Activated CD4-positive, alpha-beta T cell treated with anti-CD3 and anti-CD28 coated beads, Interleukin-2, amount 10 ng/mL, durations not matched to agents 24 days and 14 days (primary cell): ENCODE measurements at regions of chr10 and their contacts with region 1.

Region 1: DNA sequence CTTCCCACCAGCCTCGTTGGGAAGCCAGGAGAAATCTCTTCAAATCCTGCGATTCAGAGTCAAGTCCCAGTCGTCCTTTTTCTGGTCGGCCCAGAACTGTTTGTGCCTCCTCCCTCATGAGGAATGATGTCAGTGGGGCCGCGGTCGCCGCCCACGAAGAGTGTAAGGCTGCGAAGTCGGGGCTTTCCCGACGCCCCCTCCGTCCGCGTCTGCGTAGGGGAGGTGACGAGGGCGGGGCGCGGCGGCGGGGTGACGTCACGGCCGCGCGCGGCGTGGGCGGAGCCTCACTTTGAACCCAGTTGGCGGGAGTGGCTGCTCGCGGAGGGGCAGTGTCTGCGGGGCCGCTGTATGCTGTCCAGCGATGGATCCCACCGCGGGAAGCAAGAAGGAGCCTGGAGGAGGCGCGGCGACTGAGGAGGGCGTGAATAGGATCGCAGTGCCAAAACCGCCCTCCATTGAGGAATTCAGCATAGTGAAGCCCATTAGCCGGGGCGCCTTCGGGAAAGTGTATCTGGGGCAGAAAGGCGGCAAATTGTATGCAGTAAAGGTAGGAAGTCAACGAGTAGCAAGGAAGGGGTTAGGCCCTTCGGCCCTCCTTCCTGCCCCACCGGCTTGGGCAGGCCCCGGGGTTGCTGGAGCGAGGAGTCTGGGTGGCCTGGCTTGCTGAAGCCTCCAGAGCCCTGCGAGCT is at the start of gene MASTL:
- DNase-seq: peak; percentile 99
- H3K4me3 Mint-ChIP-seq: peak within 1 kb of the TSS; percentile 92
- H3K27ac Mint-ChIP-seq: peak within 1 kb of the TSS; percentile 100
- H3K4me1 Mint-ChIP-seq: peaks cover 34% of the 10 kb centered on the region
- H3K27me3 Mint-ChIP-seq: no peaks in the 10 kb centered on the region
- total RNA-seq, gene MASTL: 34.0 and 34.5 TPM in 2 replicates

Region 2: GRCh38 chr10:26437637-26438461 is 717.4 kb before region 1 on chr10 and contains the start of gene APBB1IP:
- intact Hi-C with region 1: loop called (anchors 5 kb)
- DNase-seq: peak; percentile 87
- H3K4me3 Mint-ChIP-seq: peak within 1 kb of the TSS; percentile 92
- H3K27ac Mint-ChIP-seq: peak within 1 kb of the TSS; percentile 95
- H3K4me1 Mint-ChIP-seq: peaks cover 37% of the 10 kb centered on the region
- H3K27me3 Mint-ChIP-seq: no peaks in the 10 kb centered on the region
- total RNA-seq, gene APBB1IP: 40.0 and 41.3 TPM in 2 replicates

Region 3: GRCh38 chr10:26737730-26738129 is 417.5 kb before region 1 on chr10:
- intact Hi-C with region 1: loop called (anchors 2 kb)
- DNase-seq: peak; percentile 83
- H3K4me3 Mint-ChIP-seq: peak overlapping the region; percentile 47
- H3K27ac Mint-ChIP-seq: peak overlapping the region; percentile 98
- H3K4me1 Mint-ChIP-seq: peaks cover 42% of the 10 kb centered on the region
- H3K27me3 Mint-ChIP-seq: no peaks in the 10 kb centered on the region

Region 4: DNA sequence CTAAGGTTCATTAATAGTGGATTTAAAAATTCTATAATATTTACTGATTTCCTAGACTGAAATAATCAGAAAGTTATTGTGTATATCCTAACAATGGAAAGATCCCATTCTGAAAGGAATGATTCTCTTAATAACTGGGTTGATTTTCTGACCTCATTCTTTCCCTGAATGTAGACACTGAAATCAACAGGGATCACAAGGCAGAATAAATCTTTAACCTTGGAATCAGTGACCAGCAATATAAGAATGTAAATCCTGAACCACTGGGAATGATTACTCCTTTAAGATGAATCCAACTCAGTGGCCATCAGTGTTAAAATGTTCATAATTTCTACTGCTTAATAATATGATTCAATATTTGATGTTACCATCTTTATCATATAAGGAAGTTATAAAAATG is 102.6 kb before region 1 on chr10:
- intact Hi-C with region 1: no loop called
- DNase-seq: no peak
- H3K4me3 Mint-ChIP-seq: no peak overlapping the region
- H3K27ac Mint-ChIP-seq: no peak overlapping the region
- H3K4me1 Mint-ChIP-seq: no peaks in the 10 kb centered on the region
- H3K27me3 Mint-ChIP-seq: no peaks in the 10 kb centered on the region

Region 5: DNA sequence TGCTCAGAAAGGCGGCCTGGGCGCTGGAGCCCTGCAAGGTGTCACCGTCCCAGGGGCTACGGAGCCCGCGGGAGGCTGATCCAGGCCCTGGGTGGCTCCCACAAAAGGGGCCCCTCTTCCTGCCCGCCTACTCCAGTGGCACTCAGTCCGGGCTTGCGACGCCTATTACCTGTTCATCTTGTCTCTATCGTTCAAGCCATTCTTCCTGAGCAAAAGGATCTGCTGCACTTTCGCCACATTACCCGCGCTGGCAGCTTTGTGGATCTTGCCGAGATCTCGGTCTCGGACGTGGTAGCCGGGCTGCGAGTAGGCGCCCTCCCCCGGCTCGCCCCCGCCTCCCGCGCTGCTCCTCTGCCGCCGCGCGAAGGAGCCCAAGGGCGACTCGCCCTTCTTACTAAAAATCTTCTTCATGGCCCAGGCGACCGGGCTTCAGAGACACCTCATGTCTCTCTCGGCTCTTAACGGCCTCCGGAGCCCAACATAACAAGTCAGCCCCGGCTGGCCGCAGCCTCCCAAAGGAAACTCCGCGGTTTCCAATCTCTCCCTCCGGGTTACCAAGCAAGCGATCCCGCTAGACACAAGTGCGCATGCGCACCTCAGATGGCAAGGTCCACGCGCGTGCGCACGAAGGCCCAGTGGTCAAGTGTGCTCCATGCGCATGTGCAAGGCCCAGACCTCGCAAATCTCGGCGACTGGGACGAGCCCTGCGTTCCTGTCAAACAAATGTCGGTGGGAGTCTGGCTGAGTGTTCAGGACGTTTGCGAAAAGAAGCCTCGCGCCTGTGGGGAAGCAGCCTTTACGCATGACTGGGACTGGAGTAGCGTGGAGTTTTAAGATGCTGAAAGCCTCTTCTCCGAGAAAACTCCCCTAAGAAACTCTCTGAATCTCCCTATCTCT is 55.0 kb before region 1 on chr10 and contains the start of gene ANKRD26:
- intact Hi-C with region 1: loop called (anchors 1 kb)
- DNase-seq: peak; percentile 99
- H3K4me3 Mint-ChIP-seq: peak within 1 kb of the TSS; percentile 85
- H3K27ac Mint-ChIP-seq: peak within 1 kb of the TSS; percentile 94
- H3K4me1 Mint-ChIP-seq: peaks cover 41% of the 10 kb centered on the region
- H3K27me3 Mint-ChIP-seq: peaks cover 2% of the 10 kb centered on the region
- total RNA-seq, gene ANKRD26: 5.3 and 5.8 TPM in 2 replicates

Region 6: GRCh38 chr10:27345455-27345920 is 190.3 kb after region 1 on chr10:
- intact Hi-C with region 1: loop called (anchors 5 kb)
- DNase-seq: no peak
- H3K4me3 Mint-ChIP-seq: peak overlapping the region; percentile 15
- H3K27ac Mint-ChIP-seq: peak overlapping the region; percentile 68
- H3K4me1 Mint-ChIP-seq: peaks cover 21% of the 10 kb centered on the region
- H3K27me3 Mint-ChIP-seq: peaks cover 7% of the 10 kb centered on the region

Region 7: DNA sequence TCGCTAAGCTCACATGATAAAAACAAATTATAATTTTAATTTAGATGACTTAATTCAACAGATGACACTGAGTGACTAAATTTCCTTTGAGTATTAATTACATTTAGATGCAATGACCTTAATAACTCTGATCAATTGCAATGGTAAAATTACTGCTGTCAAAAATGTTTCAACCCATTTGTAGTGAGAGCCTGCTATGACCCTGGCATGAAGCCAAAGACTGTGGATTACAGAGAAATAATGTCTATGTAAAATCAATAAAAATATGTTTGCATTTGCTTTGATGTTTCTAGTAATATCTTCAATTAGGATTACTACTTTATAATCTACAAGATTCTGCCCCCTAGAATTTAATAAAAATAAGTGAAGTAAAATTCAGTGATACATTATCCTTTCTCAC is 574.8 kb after region 1 on chr10:
- intact Hi-C with region 1: no loop called
- DNase-seq: no peak
- H3K4me3 Mint-ChIP-seq: no peak overlapping the region
- H3K27ac Mint-ChIP-seq: no peak overlapping the region
- H3K4me1 Mint-ChIP-seq: no peaks in the 10 kb centered on the region
- H3K27me3 Mint-ChIP-seq: peaks cover 31% of the 10 kb centered on the region

Region 8: GRCh38 chr10:28334296-28334695 is 1179.1 kb after region 1 on chr10:
- intact Hi-C with region 1: loop called (anchors 10 kb)
- DNase-seq: peak; percentile 92
- H3K4me3 Mint-ChIP-seq: peak overlapping the region; percentile 91
- H3K27ac Mint-ChIP-seq: peak overlapping the region; percentile 100
- H3K4me1 Mint-ChIP-seq: peaks cover 46% of the 10 kb centered on the region
- H3K27me3 Mint-ChIP-seq: peaks cover 9% of the 10 kb centered on the region